Caco-2 (cell line): ENCODE measurements at regions of chr6 and their contacts with region 1.

Region 1: DNA sequence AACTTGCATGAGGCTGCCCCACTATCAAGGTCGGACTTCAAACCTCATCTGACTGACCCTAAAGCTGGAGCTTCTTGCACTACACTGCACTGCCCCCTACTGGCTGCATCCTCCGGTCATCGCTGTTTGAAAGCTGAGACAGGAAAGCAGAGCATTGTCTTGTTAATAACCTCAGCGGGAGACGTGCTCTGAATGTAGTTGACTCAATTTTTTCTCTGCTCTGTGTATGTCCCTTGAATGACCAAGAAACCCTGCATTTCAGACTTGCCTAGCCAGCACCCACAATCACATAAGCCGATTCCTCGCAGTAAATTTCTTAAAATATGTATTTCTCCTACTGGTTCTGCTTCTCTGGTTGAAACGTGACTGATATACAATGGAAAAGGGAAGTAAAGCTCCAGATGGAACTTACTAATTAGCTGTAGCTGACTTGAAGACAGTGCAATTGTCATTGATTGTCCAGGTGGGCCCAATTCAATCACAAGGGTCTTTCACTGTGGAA is 27.8 kb downstream of the TCF21 start:
- DNase-seq: peak; percentile 83 to 86
- H3K4me3 ChIP-seq: no peak overlapping the region
- H3K4me3 Mint-ChIP-seq: no peak overlapping the region
- H3K27ac Mint-ChIP-seq: no peak overlapping the region
- H3K4me1 ChIP-seq: no peaks in the 10 kb centered on the region
- H3K4me1 Mint-ChIP-seq: no peaks in the 10 kb centered on the region
- H3K27me3 ChIP-seq: no peaks in the 10 kb centered on the region
- H3K27me3 Mint-ChIP-seq: peaks cover 16% of the 10 kb centered on the region
- CTCF ChIP-seq: peak; percentile 84 to 92

Region 2: GRCh38 chr6:133837801-133838349 is 78.8 kb before region 1 on chr6:
- CTCF ChIA-PET with region 1: interaction called, 33 read pairs
- POLR2A ChIA-PET with region 1: no interaction called
- intact Hi-C with region 1: loop called (anchors 1 kb)
- DNase-seq: peak; percentile 67 to 83
- H3K4me3 ChIP-seq: peak overlapping the region; percentile 47
- H3K4me3 Mint-ChIP-seq: peak overlapping the region; percentile 70
- H3K27ac Mint-ChIP-seq: peak overlapping the region; percentile 48
- H3K4me1 ChIP-seq: no peaks in the 10 kb centered on the region
- H3K4me1 Mint-ChIP-seq: no peaks in the 10 kb centered on the region
- H3K27me3 ChIP-seq: no peaks in the 10 kb centered on the region
- H3K27me3 Mint-ChIP-seq: no peaks in the 10 kb centered on the region
- CTCF ChIP-seq: peak; percentile 89

Region 3: GRCh38 chr6:133854364-133855275 is 62.1 kb before region 1 on chr6:
- CTCF ChIA-PET with region 1: interaction called, 5 read pairs
- POLR2A ChIA-PET with region 1: no interaction called
- intact Hi-C with region 1: loop called (anchors 1 kb)
- DNase-seq: peak; percentile 56 to 61
- H3K4me3 ChIP-seq: 0 out of 2 replicates have a peak overlapping the region, but pooled peaks have one; percentile 23
- H3K4me3 Mint-ChIP-seq: peak overlapping the region; percentile 44
- H3K27ac Mint-ChIP-seq: no peak overlapping the region
- H3K4me1 ChIP-seq: no peaks in the 10 kb centered on the region
- H3K4me1 Mint-ChIP-seq: no peaks in the 10 kb centered on the region
- H3K27me3 ChIP-seq: no peaks in the 10 kb centered on the region
- H3K27me3 Mint-ChIP-seq: peaks cover 16% of the 10 kb centered on the region
- CTCF ChIP-seq: peak in 1 of 2 experiments; percentile 46